Activated T-helper 2 cell treated with anti-CD3 and anti-CD28 coated beads, Interferon-gamma antibody, Interleukin-2, Interleukin-4, amounts not matched to agents 10 μg/mL and 5 μg/mL and 100 μg/mL, durations not matched to agents 14 hours and 24 hours and 36 hours (primary cell): ENCODE measurements at regions of chr3 and their contacts with region 1.

Region 1: DNA sequence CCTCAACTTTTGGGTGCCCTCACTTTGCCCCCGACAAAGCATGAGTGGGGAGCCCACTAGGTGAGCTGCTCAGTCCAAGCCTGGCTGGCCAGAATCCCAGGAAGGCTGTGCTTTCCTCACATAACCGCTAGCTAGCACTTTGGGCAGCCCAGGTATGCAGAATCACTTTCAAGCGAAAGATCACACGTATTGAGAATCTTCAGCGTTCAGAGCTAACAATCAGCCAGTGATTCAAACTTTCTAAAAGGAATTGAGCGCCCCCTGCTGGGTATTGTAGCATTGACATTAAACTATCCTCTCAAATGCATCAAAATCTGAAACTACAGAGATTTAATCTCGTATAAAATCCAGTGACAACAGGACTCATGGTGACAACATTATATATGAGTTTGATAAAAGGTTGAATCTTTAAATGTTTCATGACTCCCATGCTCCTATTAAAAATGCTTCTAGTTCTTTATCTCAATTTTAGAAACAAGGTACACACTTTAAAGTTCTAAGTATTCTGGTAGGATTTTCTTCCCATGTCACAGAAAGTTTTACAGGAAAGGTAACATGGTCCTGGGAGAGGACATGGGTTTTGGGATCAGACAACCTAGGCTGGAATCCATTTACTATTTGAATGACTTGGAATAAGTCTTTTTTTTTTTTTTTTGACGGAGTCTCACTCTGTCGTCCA is 11.8 kb downstream of the ANAPC13 start:
- DNase-seq: peak; percentile 59
- H3K4me3 Mint-ChIP-seq: no peak overlapping the region
- H3K27ac Mint-ChIP-seq: no peak overlapping the region
- H3K4me1 Mint-ChIP-seq: no peaks in the 10 kb centered on the region
- H3K27me3 Mint-ChIP-seq: no peaks in the 10 kb centered on the region

Region 2: DNA sequence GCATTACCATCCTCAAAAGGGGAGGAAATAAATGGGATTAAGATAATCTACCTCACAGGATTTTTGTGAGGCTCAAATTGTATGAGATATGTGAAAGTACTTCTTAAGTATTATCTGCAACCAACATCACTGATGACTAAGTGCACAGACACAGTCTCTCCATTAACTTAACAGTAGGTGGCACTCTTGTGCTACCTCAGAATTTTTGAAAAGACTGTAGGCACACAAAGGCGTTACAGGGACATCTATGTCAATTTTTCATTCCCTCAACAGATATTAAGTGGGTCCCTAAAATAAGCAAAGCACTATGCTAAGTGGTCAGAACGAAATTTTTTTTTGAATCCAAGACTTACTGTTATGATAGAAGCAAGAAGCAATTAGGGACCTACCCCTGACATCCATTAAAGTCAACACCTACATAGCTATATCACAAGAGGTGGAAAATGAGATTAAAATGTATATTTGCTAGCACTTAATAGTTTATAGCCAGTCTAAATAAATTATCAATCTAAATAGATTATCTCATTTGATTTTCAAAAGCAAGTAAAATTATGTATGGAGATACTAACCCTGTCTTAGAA is 276.2 kb before region 1 on chr3:
- intact Hi-C with region 1: loop called (anchors 1 kb)
- DNase-seq: no peak
- H3K4me3 Mint-ChIP-seq: no peak overlapping the region
- H3K27ac Mint-ChIP-seq: no peak overlapping the region
- H3K4me1 Mint-ChIP-seq: peaks cover 7% of the 10 kb centered on the region
- H3K27me3 Mint-ChIP-seq: no peaks in the 10 kb centered on the region

Region 3: GRCh38 chr3:134212906-134213665 is 260.9 kb before region 1 on chr3:
- intact Hi-C with region 1: loop called (anchors 1 kb)
- DNase-seq: peak; percentile 62
- H3K4me3 Mint-ChIP-seq: no peak overlapping the region
- H3K27ac Mint-ChIP-seq: no peak overlapping the region
- H3K4me1 Mint-ChIP-seq: peaks cover 10% of the 10 kb centered on the region
- H3K27me3 Mint-ChIP-seq: peaks cover 6% of the 10 kb centered on the region

Region 4: GRCh38 chr3:134308350-134308891 is 165.6 kb before region 1 on chr3:
- intact Hi-C with region 1: loop called (anchors 1 kb)
- DNase-seq: peak; percentile 49
- H3K4me3 Mint-ChIP-seq: no peak overlapping the region
- H3K27ac Mint-ChIP-seq: no peak overlapping the region
- H3K4me1 Mint-ChIP-seq: peaks cover 2% of the 10 kb centered on the region
- H3K27me3 Mint-ChIP-seq: peaks cover 64% of the 10 kb centered on the region